ENCODE measurements at regions of chr5 and their contacts with region 1.

Region 1: GRCh38 chr5:156640691-156641241 is 209.3 kb upstream of the PPP1R2B start:
- DNase-seq: no peak
- H3K4me3 ChIP-seq: no peak overlapping the region
- H3K27ac ChIP-seq: peak overlapping the region; percentile 60 to 75 (median 68)
- H3K4me1 ChIP-seq: peaks cover 14 to 27% (median 21%) of the 10 kb centered on the region in 4 donors
- H3K27me3 ChIP-seq: no peaks in the 10 kb centered on the region
- CTCF ChIP-seq: no peak
- EP300 ChIP-seq: no peak
- POLR2A ChIP-seq: no peak

Region 2: GRCh38 chr5:155091063-155091648 is 1549.6 kb before region 1 on chr5:
- intact Hi-C with region 1: loop called (anchors 10 kb)
- DNase-seq: no peak
- H3K4me3 ChIP-seq: no peak overlapping the region
- H3K27ac ChIP-seq: peak overlapping the region in 3 of 4 donors; percentile 6 to 28 (median 10)
- H3K4me1 ChIP-seq: peaks cover 23 to 70% (median 53%) of the 10 kb centered on the region in 4 donors
- H3K27me3 ChIP-seq: no peaks in the 10 kb centered on the region
- CTCF ChIP-seq: no peak
- EP300 ChIP-seq: no peak
- POLR2A ChIP-seq: no peak

Region 3: DNA sequence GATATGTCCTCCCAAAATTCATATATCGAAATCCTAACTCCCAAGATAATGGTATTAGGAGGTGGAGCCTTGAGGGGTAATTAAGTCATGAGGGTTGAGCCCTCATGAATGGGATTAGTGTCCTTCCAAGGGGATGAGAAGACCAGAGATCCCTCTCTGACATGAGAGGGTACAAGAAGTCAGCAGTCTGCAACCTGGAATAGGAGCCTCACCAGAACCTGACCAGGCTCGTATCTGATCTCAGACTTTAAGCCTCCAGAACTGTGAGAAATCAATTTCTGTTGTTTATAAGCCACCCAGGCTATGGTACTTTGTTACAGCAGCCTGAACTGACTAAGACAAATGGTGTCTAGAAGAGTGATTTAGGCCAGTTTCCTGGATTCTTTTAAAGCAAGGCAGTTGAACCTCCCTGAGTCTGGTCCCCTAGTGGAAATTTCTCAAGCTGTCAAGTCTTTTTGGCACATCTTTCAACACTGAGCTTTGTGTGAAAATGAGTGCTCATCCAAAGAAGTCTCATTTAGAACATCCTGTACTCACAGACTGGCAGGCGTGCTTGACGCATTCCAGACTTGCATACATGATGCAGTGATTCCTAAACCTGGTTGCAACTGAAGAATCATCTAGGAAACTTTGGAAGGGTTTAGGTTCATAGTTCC is 45.5 kb before region 1 on chr5:
- intact Hi-C with region 1: loop called (anchors 5 kb)
- DNase-seq: peak; percentile 93
- H3K4me3 ChIP-seq: no peak overlapping the region
- H3K27ac ChIP-seq: peak overlapping the region; percentile 75 to 89 (median 84)
- H3K4me1 ChIP-seq: peaks cover 3 to 52% (median 35%) of the 10 kb centered on the region in 4 donors
- H3K27me3 ChIP-seq: no peaks in the 10 kb centered on the region
- CTCF ChIP-seq: peak; percentile 16 to 42 (median 18)
- EP300 ChIP-seq: peak; percentile 97
- POLR2A ChIP-seq: no peak